ENCODE measurements at regions of chr2 and their contacts with region 1.

Region 1: DNA sequence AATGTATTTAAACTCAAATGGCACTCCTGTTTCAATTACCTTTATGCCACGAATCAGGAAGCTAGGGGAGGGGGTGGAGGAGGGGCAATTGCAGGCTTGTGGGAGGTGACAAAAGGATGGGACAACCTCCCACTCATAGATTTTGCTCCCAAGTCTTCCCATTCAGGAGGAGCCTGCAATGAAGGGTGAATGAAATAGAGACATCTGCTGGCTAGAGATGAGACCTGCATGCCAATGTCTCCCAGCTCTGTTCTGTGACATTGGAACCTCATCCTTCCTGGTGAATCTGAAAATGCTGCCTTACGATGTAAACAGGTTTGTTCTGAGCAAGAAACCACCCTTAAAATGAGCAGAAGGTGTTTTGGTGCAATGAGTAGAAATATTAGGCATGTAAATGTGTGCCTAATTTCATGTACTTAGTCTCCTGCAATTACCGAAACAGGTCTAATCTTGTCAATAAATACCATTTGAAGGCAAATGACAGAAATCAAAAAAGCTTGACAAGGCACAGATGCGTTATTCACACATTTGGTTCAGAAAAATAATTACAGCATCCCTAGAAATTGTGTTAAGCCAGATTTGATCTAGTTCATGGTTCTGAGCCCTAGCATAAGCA is 2.7 kb upstream of the PID1 start:
- DNase-seq: peak; percentile 79
- H3K4me3 ChIP-seq: peak overlapping the region; percentile 29 to 47
- H3K27ac ChIP-seq: no peak overlapping the region
- H3K4me1 ChIP-seq: peaks cover 0 to 2% of the 10 kb centered on the region in 2 experiments; a peak in 1 of 4 replicates
- H3K27me3 ChIP-seq: no peaks in the 10 kb centered on the region
- CTCF ChIP-seq: peak; percentile 74
- EP300 ChIP-seq: no peak
- RAD21 ChIP-seq: peak; percentile 87

Region 2: DNA sequence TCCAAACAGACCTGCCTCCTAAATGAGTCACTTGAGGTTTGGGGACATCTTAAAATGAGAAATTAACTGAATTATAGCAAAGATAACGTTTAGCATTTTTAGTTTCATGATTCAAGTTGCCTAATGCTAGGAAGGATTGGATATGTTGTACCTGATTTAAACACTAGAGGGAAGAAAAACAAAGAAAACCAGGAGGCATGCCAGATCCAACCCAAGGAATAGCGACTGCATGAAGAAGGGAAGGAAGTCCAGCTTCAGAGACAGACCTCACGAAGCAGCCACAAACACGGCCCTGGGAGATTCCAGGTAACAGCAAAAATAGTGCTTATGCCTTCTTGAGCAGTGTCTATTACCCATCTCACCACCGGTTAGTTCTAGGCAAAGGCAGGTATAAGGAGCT is 592.4 kb before region 1 on chr2:
- CTCF ChIA-PET with region 1: interaction called, 16 read pairs
- POLR2A ChIA-PET with region 1: no interaction called
- DNase-seq: peak; percentile 16
- H3K4me3 ChIP-seq: no peak overlapping the region
- H3K27ac ChIP-seq: no peak overlapping the region
- H3K4me1 ChIP-seq: peaks cover 0 to 3% of the 10 kb centered on the region in 2 experiments; a peak in 1 of 4 replicates
- H3K27me3 ChIP-seq: no peaks in the 10 kb centered on the region; the same call in 1 of the 2 replicates
- CTCF ChIP-seq: peak; percentile 50
- EP300 ChIP-seq: no peak
- RAD21 ChIP-seq: peak; percentile 55

Region 3: DNA sequence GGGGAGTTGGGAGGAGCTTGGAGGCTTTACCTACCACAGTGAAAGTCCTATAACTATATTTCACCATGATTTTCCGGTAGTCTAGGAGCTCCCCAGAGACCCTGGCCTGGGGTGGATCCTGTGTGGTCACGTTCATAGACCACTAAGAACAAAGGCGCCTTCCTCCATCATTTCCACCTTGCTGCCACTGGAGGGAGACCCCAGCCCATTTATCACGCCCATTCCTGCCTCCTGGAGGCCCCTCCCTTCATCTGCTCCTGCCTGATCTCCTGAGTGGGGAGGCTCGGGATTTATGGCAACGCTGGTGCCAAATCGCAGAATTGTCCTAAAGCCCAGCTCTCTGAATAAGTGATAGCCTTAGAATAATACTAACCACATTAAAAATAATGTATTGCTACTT is 584.8 kb before region 1 on chr2:
- CTCF ChIA-PET with region 1: interaction called, 33 read pairs
- POLR2A ChIA-PET with region 1: no interaction called
- DNase-seq: peak; percentile 60
- H3K4me3 ChIP-seq: no peak overlapping the region; a peak in 1 of 4 replicates
- H3K27ac ChIP-seq: no peak overlapping the region
- H3K4me1 ChIP-seq: peaks cover 0 to 4% of the 10 kb centered on the region in 2 experiments; a peak in 1 of 4 replicates
- H3K27me3 ChIP-seq: no peaks in the 10 kb centered on the region
- CTCF ChIP-seq: no peak
- EP300 ChIP-seq: no peak
- RAD21 ChIP-seq: peak; percentile 83

Region 4: DNA sequence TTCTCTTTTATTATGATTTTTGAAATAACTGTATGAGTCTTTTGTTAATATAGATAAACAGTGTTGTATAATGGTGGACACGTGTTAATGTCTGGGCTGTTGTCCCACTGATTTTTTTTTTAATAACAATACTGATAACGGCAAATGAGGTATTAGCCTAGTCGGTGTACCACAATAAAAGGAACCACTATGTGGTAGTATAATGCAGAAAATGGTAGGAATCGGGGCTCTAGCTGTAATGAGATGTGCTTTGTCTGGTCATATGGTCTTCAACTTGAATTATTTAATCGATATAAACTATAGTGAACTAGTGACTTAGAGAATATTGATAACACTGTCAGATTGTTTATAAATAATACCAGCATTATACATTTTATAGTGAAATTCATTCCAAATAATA is 574.4 kb before region 1 on chr2:
- CTCF ChIA-PET with region 1: interaction called, 15 read pairs
- POLR2A ChIA-PET with region 1: no interaction called
- DNase-seq: no peak
- H3K4me3 ChIP-seq: no peak overlapping the region
- H3K27ac ChIP-seq: no peak overlapping the region
- H3K4me1 ChIP-seq: no peaks in the 10 kb centered on the region; a peak in 1 of 4 replicates
- H3K27me3 ChIP-seq: no peaks in the 10 kb centered on the region
- CTCF ChIP-seq: no peak
- EP300 ChIP-seq: no peak
- RAD21 ChIP-seq: peak; percentile 55

Region 5: DNA sequence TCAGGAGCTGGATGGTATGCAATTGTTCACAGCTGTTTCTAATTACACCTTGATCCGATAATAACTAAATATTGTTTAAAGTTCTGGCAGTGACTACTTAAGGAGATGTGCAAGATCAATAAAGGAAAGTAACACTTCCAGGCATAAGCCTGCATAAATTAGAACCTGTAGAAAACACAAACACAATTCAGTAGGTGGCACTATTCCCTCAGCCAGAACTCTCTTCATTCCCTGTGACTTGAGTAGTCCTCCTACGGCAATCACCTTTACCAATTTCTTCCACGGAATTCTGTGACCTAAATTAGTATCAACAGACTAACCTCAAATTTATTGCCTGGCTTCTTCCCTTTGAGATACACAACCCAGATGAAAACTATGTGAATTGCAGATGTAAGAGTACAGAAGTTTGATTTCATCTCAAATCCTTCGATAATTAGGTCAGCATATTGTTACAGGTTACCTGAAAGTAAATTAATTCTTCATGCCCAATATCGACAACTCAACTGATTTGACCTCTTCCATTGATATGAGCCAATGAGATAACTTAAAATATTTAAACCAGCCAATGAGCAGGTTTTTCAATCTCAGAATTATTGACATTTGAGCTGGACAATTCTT is 140.6 kb before region 1 on chr2:
- CTCF ChIA-PET with region 1: interaction called, 88 read pairs
- POLR2A ChIA-PET with region 1: no interaction called
- DNase-seq: peak; percentile 35
- H3K4me3 ChIP-seq: no peak overlapping the region
- H3K27ac ChIP-seq: no peak overlapping the region
- H3K4me1 ChIP-seq: peaks cover 0 to 14% of the 10 kb centered on the region in 2 experiments; a peak in 2 of 4 replicates
- H3K27me3 ChIP-seq: no peaks in the 10 kb centered on the region
- CTCF ChIP-seq: peak; percentile 17; the same call in 1 of the 2 replicates
- EP300 ChIP-seq: no peak
- RAD21 ChIP-seq: peak; percentile 85

Measured in SK-N-SH (cell line).